PC-3 (cell line): ENCODE measurements at regions of chr1 and their contacts with region 1.

Region 1: GRCh38 chr1:204487256-204487615 is 7.4 kb downstream of the PIK3C2B start:
- DNase-seq: no peak
- ATAC-seq: no peak
- H3K4me3 ChIP-seq: no peak overlapping the region
- H3K27ac ChIP-seq: no peak overlapping the region
- H3K4me1 ChIP-seq: peaks cover 8% of the 10 kb centered on the region
- H3K27me3 ChIP-seq: no peaks in the 10 kb centered on the region
- CTCF ChIP-seq: no peak

Region 2: DNA sequence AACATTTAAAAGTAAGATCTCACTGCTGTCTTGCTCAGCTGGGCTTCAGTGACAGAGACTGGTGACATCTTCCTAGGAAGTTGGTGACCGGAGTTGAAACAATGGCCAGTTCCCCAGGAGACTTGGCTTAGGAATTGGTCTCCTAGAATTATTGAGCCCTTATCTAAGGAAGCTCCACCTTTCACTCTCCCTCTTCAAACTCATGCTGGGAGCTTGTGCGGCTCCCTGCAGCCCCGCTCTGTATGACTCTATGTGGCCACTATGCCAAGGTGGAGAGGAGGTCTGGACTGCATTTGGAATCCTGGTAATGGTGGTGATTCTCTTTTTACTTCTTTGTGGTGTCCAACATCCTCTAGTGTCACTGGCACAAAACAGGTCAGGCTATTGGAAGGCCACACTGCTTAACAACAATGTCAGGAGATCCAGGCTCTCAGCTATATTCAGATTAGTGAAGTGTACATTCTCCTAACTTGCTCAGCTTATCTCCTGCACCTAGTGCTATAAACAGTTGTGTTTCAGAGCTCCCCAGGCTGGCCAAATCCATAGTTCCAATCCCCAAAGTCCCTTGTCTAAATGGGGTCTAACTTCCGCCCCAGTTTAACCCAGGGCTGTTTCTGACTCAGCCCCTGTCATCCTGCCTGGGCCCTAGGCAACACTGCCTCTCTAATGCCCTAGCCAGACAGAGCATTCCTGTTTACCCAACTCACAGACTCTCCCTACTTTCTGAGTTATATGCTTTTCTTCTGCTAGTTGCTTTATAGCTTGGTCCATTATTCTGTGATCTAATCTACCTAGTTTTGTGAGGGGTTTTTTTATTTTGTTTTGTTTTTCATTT is 842.4 kb before region 1 on chr1:
- CTCF ChIA-PET with region 1: no interaction called
- POLR2A ChIA-PET with region 1: interaction called, 11 read pairs
- intact Hi-C with region 1: no loop called
- DNase-seq: peak; percentile 75
- ATAC-seq: peak; percentile 91
- H3K4me3 ChIP-seq: no peak overlapping the region
- H3K27ac ChIP-seq: peak overlapping the region; percentile 33
- H3K4me1 ChIP-seq: peaks cover 18% of the 10 kb centered on the region
- H3K27me3 ChIP-seq: no peaks in the 10 kb centered on the region
- CTCF ChIP-seq: no peak

Region 3: DNA sequence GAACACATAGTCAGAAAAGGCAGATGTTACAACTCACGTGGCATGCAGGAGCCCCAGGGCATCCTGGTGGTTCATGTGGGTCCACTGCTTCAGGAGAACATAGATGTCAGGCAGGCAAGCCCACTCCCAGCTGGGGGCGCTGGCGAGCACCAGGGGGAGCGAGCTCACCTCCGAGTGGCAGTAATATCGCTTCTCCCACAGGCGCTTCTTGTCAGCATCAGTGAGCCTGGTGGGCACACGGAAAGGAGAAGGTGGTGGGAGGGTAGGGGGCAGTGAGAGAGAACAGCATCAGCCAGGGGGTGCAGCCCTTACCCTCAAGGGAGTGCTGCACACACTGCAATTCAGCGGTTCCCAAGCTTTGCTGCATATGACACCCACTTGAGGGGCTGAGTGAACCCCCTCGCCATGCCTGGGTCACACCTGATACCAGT is 41.3 kb before region 1 on chr1:
- CTCF ChIA-PET with region 1: no interaction called
- POLR2A ChIA-PET with region 1: no interaction called
- intact Hi-C with region 1: no loop called
- DNase-seq: peak; percentile 55
- ATAC-seq: no peak
- H3K4me3 ChIP-seq: no peak overlapping the region
- H3K27ac ChIP-seq: no peak overlapping the region
- H3K4me1 ChIP-seq: peaks cover 58% of the 10 kb centered on the region
- H3K27me3 ChIP-seq: no peaks in the 10 kb centered on the region
- CTCF ChIP-seq: peak; percentile 68

Region 4: DNA sequence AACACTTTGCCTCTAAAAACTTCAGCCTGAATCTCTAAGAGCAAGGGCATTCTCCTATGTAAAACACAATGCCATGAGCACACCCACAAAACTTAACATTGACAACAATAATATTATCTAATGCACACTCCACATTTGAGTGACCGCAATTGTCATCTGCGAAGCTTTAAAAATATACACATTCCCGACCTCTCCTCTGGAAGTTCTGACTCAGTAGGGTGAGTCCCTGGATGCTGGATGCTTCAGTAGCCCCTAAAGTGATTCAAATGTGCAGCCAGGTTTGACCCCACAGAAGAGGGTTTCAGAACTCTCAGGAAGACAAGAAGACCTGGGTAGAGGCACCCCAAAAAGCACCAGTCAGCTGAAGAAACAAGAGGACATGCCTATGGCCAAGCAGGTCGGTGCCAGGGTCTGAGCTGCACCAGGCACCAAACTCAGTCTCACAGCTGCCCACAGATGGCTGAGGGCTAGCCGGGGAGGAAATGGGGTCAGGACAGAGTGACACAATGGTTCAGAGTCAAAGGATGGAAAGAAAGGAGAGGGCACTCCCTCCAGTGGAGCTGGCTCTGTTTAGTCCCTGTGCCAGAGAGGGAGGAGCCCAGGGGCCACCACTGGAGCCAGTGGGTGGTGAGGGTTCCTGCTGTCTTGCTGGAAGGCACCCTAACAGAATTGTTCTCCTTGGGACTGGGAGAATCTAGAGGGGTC is 10.0 kb before region 1 on chr1:
- CTCF ChIA-PET with region 1: no interaction called
- POLR2A ChIA-PET with region 1: no interaction called
- intact Hi-C with region 1: no loop called
- DNase-seq: no peak
- ATAC-seq: no peak
- H3K4me3 ChIP-seq: no peak overlapping the region
- H3K27ac ChIP-seq: no peak overlapping the region
- H3K4me1 ChIP-seq: peaks cover 14% of the 10 kb centered on the region
- H3K27me3 ChIP-seq: no peaks in the 10 kb centered on the region
- CTCF ChIP-seq: no peak